ENCODE measurements at regions of chrX and their contacts with region 1.

Region 1: GRCh38 chrX:43958529-43958928 is 14.7 kb downstream of the NDP start:
- DNase-seq: no peak
- H3K4me3 ChIP-seq: no peak overlapping the region
- H3K27ac ChIP-seq: no peak overlapping the region
- H3K4me1 ChIP-seq: no peaks in the 10 kb centered on the region
- H3K27me3 ChIP-seq: no peaks in the 10 kb centered on the region
- CTCF ChIP-seq: peak; percentile 61 to 85 (median 78)
- POLR2A ChIP-seq: no peak

Region 2: GRCh38 chrX:44244008-44244407 is 285.5 kb after region 1 on chrX:
- intact Hi-C with region 1: loop called (anchors 5 kb)
- DNase-seq: no peak
- H3K4me3 ChIP-seq: no peak overlapping the region
- H3K27ac ChIP-seq: no peak overlapping the region
- H3K4me1 ChIP-seq: no peaks in the 10 kb centered on the region
- H3K27me3 ChIP-seq: no peaks in the 10 kb centered on the region
- CTCF ChIP-seq: peak in 5 of 6 experiments; percentile 34 to 57 (median 41)
- POLR2A ChIP-seq: no peak